Gastrocnemius medialis (tissue), 4 donors: ENCODE measurements at regions of chr15 and their contacts with region 1.

Region 1: DNA sequence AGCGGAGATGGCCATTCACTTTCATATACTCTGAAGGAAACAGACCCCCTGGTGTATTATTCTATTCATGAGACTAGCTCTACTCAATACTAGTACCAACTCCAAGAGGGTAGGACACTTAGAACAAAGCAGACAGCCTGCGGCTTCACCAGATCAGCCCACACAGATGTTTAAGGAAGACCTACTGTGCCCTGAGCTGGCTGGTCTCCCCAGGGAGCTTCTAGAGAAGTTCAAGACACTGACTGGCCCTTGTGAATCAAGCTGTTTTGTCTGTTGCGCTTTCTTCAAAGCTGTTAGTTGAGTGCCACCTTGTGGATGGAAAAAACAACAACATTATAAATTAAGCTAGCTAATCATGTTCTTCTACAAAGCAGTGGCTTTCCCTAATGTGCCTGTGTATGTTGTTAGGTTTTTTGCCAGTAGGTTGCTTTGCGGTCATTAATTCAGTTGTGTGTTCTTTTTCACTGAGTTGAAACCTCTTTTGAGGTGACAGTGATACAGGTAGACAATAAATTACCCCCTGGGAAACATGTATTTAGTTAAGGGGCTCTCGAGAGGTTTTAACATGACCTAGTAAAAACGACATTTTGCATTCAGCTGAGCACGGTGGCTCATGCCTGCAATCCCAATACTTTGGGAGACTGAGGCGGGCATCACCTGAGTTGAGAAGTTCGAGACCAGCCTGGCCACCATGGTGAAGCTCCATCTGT is 64.2 kb upstream of the MYZAP start:
- DNase-seq: no peak
- ATAC-seq: peak; percentile 65 to 92
- H3K4me3 ChIP-seq: no peak overlapping the region
- H3K27ac ChIP-seq: no peak overlapping the region
- H3K4me1 ChIP-seq: no peaks in the 10 kb centered on the region
- H3K27me3 ChIP-seq: no peaks in the 10 kb centered on the region
- CTCF ChIP-seq: peak; percentile 40 to 73 (median 64)
- POLR2A ChIP-seq: no peak

Region 2: GRCh38 chr15:56491110-56491722 is 1036.3 kb before region 1 on chr15:
- in situ Hi-C with region 1: loop called in 1 of 4 experiments (anchors 25 kb)
- intact Hi-C with region 1: loop called (anchors 5 kb)
- DNase-seq: peak; percentile 23 to 24
- ATAC-seq: no peak
- H3K4me3 ChIP-seq: no peak overlapping the region
- H3K27ac ChIP-seq: no peak overlapping the region
- H3K4me1 ChIP-seq: no peaks in the 10 kb centered on the region
- H3K27me3 ChIP-seq: no peaks in the 10 kb centered on the region
- CTCF ChIP-seq: peak in 4 of 5 experiments; percentile 27 to 75 (median 58)
- POLR2A ChIP-seq: no peak

Region 3: GRCh38 chr15:56496635-56497034 is 1030.9 kb before region 1 on chr15:
- in situ Hi-C with region 1: loop called in 1 of 4 experiments (anchors 25 kb)
- intact Hi-C with region 1: loop called (anchors 5 kb)
- DNase-seq: no peak
- ATAC-seq: peak; percentile 65 to 78
- H3K4me3 ChIP-seq: peak overlapping the region in 1 of 4 donors; percentile 5
- H3K27ac ChIP-seq: no peak overlapping the region
- H3K4me1 ChIP-seq: no peaks in the 10 kb centered on the region
- H3K27me3 ChIP-seq: no peaks in the 10 kb centered on the region
- CTCF ChIP-seq: peak; percentile 26 to 72 (median 57)
- POLR2A ChIP-seq: no peak

Region 4: GRCh38 chr15:57146506-57147201 is 380.9 kb before region 1 on chr15:
- in situ Hi-C with region 1: loop called in 2 of 4 experiments (anchors 25 kb)
- intact Hi-C with region 1: loop called (anchors 10 kb)
- DNase-seq: no peak
- ATAC-seq: peak in 1 of 2 donors; percentile 33
- H3K4me3 ChIP-seq: peak overlapping the region in 3 of 4 donors; percentile 22 to 42 (median 31)
- H3K27ac ChIP-seq: peak overlapping the region in 1 of 4 donors; percentile 2
- H3K4me1 ChIP-seq: peaks cover 37 to 39% of the 10 kb centered on the region in 2 donors
- H3K27me3 ChIP-seq: no peaks in the 10 kb centered on the region
- CTCF ChIP-seq: peak; percentile 51 to 79 (median 62)
- POLR2A ChIP-seq: no peak

Region 5: DNA sequence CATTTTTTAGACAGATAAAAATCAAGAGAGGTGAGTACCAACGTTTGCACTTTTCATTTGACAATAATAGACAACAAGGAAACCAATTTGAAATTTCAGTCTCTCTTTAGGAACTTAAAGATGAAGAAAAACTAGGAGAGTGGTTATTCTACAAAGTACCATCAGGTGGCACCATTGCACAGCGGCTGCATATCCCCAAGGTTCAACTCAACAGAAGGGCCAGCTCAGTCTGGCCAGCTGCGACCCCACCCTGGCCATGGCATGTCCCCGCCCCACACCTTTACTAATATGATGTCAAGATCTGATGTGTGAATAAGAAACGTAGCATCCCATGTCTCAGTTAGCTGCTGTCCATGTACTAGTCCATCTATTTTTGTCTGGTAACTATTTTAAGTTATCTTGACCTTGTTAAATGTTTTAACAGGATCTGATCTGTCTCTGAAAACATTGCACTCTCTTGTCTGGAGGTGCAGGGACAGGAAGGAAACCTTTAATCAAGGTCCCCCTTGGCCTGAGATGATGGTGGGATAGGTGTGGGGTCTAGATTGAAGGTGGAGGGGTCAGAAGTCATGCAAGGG is 186.8 kb before region 1 on chr15:
- in situ Hi-C with region 1: loop called (anchors 5 kb)
- intact Hi-C with region 1: loop called (anchors 1 kb)
- DNase-seq: no peak
- ATAC-seq: peak in 1 of 2 donors; percentile 72
- H3K4me3 ChIP-seq: no peak overlapping the region
- H3K27ac ChIP-seq: no peak overlapping the region
- H3K4me1 ChIP-seq: no peaks in the 10 kb centered on the region
- H3K27me3 ChIP-seq: no peaks in the 10 kb centered on the region
- CTCF ChIP-seq: peak; percentile 61 to 88 (median 76)
- POLR2A ChIP-seq: no peak

Region 6: GRCh38 chr15:57496946-57497869 is 30.3 kb before region 1 on chr15:
- in situ Hi-C with region 1: no loop called
- intact Hi-C with region 1: no loop called
- DNase-seq: no peak
- ATAC-seq: no peak
- H3K4me3 ChIP-seq: no peak overlapping the region
- H3K27ac ChIP-seq: no peak overlapping the region
- H3K4me1 ChIP-seq: no peaks in the 10 kb centered on the region
- H3K27me3 ChIP-seq: no peaks in the 10 kb centered on the region
- CTCF ChIP-seq: no peak
- POLR2A ChIP-seq: no peak